CD4-positive, alpha-beta memory T cell (primary cell): ENCODE measurements at regions of chr15 and their contacts with region 1.

Region 1: GRCh38 chr15:34209421-34210282 is at the start of gene KATNBL1:
- DNase-seq: peak; percentile 89 to 92 (median 89)
- H3K4me3 ChIP-seq: peak within 1 kb of the TSS; percentile 37 to 72
- H3K4me3 Mint-ChIP-seq: peak within 1 kb of the TSS; percentile 88 to 95 (median 92)
- H3K27ac ChIP-seq: peak within 1 kb of the TSS; percentile 66
- H3K27ac Mint-ChIP-seq: peak within 1 kb of the TSS; percentile 61 to 93 (median 91)
- H3K4me1 ChIP-seq: peaks cover 13% of the 10 kb centered on the region
- H3K4me1 Mint-ChIP-seq: peaks cover 15 to 29% (median 21%) of the 10 kb centered on the region in 4 donors
- H3K27me3 ChIP-seq: no peaks in the 10 kb centered on the region
- H3K27me3 Mint-ChIP-seq: peaks cover 0 to 4% of the 10 kb centered on the region in 2 donors
- total RNA-seq, gene KATNBL1: 34.7 to 37.9 TPM

Region 2: DNA sequence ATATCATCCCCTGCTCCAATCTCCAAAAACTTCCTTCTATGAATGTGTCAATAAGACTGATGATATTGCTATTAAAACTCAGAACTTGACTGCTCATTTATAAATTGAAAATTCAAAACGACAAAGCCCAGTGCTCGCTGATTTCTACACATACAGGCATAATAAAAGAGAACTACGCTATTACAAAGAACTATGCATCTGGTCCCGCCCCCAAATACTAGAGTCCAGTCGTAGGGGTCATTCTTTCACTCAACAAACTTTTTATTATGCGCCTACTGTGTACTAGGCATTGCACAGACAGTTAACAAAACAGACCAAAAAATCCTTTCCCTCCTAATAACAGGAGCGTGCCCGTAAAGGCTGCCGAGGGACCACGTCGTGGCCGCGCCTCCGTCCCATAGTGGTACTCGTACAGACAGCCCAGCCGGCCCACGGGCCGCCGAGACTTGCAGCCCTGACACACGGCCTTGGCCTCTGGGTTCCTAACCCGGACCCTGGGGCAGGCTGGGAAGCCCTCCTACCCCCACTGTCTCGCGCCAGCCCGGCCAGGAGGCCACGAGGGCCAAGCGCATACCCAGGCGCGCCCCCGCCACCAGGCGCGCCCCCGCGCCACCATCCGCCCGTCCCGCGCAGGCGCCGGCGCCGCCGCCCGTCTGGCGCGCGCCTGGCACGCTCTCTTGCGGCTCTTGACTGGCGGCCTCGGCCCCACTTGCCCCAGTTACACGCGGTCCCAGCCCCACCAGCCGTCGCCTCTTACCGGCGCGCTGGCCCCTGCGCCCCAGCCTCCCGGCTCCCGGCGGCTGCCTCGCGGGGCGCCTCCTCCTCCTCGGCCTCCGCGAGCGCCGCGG is 171.4 kb before region 1 on chr15:
- CTCF ChIA-PET with region 1: interaction called, 3 read pairs
- POLR2A ChIA-PET with region 1: interaction called, 6 read pairs
- intact Hi-C with region 1: loop called (anchors 1 kb)
- DNase-seq: peak; percentile 65 to 74 (median 70)
- H3K4me3 ChIP-seq: peak overlapping the region; percentile 92 to 96
- H3K4me3 Mint-ChIP-seq: peak overlapping the region; percentile 85 to 97 (median 94)
- H3K27ac ChIP-seq: peak overlapping the region; percentile 73
- H3K27ac Mint-ChIP-seq: peak overlapping the region; percentile 83 to 96 (median 93)
- H3K4me1 ChIP-seq: peaks cover 13% of the 10 kb centered on the region
- H3K4me1 Mint-ChIP-seq: peaks cover 9 to 23% (median 15%) of the 10 kb centered on the region in 4 donors
- H3K27me3 ChIP-seq: no peaks in the 10 kb centered on the region
- H3K27me3 Mint-ChIP-seq: no peaks in the 10 kb centered on the region

Region 3: GRCh38 chr15:34055853-34056595 is 153.6 kb before region 1 on chr15:
- CTCF ChIA-PET with region 1: interaction called, 118 read pairs
- POLR2A ChIA-PET with region 1: interaction called, 5 read pairs
- intact Hi-C with region 1: no loop called
- DNase-seq: no peak
- H3K4me3 ChIP-seq: no peak overlapping the region
- H3K4me3 Mint-ChIP-seq: no peak overlapping the region
- H3K27ac ChIP-seq: no peak overlapping the region
- H3K27ac Mint-ChIP-seq: no peak overlapping the region
- H3K4me1 ChIP-seq: no peaks in the 10 kb centered on the region
- H3K4me1 Mint-ChIP-seq: no peaks in the 10 kb centered on the region
- H3K27me3 ChIP-seq: no peaks in the 10 kb centered on the region
- H3K27me3 Mint-ChIP-seq: peaks cover 0 to 4% of the 10 kb centered on the region in 2 donors

Region 4: GRCh38 chr15:34109797-34110663 is 99.6 kb before region 1 on chr15:
- CTCF ChIA-PET with region 1: interaction called, 21 read pairs
- POLR2A ChIA-PET with region 1: interaction called, 3 read pairs
- intact Hi-C with region 1: no loop called
- DNase-seq: peak in 4 of 5 donors; percentile 6 to 28 (median 16)
- H3K4me3 ChIP-seq: no peak overlapping the region
- H3K4me3 Mint-ChIP-seq: peak overlapping the region in 1 of 8 donors; percentile 4
- H3K27ac ChIP-seq: no peak overlapping the region
- H3K27ac Mint-ChIP-seq: peak overlapping the region in 2 of 7 donors; percentile 49 to 56
- H3K4me1 ChIP-seq: no peaks in the 10 kb centered on the region
- H3K4me1 Mint-ChIP-seq: peaks cover 0 to 3% (median 0%) of the 10 kb centered on the region in 4 donors
- H3K27me3 ChIP-seq: peaks cover 7% of the 10 kb centered on the region
- H3K27me3 Mint-ChIP-seq: peaks cover 0 to 4% of the 10 kb centered on the region in 2 donors

Region 5: DNA sequence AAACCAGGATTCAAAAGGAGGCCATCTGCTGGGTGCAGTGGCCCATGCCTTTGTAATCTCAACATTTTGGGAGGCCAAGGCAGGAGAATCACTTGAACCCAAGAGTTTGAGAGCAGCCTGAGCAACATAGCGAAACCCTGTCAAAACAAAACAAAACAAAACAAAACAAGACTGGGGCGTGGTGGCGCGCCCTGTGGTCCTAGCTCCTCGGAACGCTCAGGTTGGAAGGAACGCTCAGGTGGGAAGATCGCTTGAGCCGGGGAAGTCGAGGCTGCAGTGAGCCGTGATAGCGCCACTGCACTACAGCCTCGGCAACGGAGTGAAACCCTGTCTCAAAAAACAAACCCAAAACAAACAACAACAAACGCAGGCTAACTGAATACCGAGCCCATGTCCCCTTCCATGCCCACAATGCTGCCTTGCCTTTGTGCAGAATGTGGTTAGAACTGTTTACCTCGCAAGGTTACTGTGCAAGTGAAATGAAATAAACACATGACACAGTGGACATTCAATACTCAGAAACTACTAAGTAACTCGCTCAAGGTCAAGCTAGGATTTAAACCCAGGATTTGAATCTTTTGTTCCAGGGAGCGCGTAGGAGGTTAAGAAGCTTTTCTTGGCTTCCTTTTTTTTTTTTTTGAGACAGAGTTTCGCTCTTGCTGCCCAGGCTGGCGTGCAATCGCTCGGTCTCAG is 14.4 kb after region 1 on chr15:
- CTCF ChIA-PET with region 1: interaction called, 13 read pairs
- POLR2A ChIA-PET with region 1: interaction called, 9 read pairs
- intact Hi-C with region 1: loop called (anchors 1 kb)
- DNase-seq: no peak
- H3K4me3 ChIP-seq: peak overlapping the region; percentile 88 to 93
- H3K4me3 Mint-ChIP-seq: peak overlapping the region; percentile 90 to 99 (median 96)
- H3K27ac ChIP-seq: peak overlapping the region; percentile 89
- H3K27ac Mint-ChIP-seq: peak overlapping the region; percentile 92 to 100 (median 99)
- H3K4me1 ChIP-seq: peaks cover 25% of the 10 kb centered on the region
- H3K4me1 Mint-ChIP-seq: peaks cover 21 to 32% (median 25%) of the 10 kb centered on the region in 4 donors
- H3K27me3 ChIP-seq: no peaks in the 10 kb centered on the region
- H3K27me3 Mint-ChIP-seq: peaks cover 3% of the 10 kb centered on the region in 2 donors